ENCODE measurements at regions of chr15 and their contacts with region 1.

Region 1: DNA sequence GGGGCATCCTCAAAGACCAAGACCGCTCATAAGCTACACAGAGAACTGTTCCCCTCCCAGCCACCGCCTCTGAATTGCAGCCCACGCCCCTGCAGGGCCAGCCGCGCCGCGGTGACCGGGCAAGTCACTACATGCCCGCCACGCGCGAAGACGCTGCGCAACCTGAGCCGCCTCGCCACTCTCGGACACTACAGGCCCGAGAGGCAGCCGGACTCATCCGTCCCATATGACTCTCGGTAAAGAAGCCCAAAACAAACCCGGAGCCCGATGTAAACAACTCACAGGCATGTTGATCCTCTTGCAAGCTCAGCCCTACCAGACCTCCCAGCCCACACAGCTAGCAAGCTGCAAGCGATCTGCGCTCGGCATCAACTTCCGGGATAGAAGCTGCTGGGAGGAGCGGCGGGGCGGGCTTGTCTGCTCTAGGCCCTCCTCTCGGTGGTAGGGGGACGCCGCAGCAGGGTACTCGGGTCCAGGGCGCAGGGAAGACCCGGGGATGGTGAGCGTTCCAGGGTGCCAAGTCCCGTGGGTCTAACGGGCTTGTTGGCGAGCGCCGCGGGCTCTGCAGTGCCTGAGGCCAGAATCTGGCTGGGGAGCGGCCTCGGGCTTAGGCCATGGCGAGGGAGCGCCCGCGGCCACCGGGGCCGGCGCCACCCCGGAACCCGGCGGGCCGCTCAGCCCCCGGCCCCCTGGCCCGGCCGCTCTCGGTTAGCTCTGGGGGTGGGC is at the start of gene RPS27L:
- DNase-seq: peak; percentile 78
- ATAC-seq: peak; percentile 96
- H3K4me3 ChIP-seq: peak within 1 kb of the TSS; percentile 82 to 89
- H3K27ac ChIP-seq: peak within 1 kb of the TSS; percentile 92
- H3K4me1 ChIP-seq: peaks cover 9 to 13% of the 10 kb centered on the region in 2 experiments; a peak in 3 of 4 replicates
- H3K27me3 ChIP-seq: no peaks in the 10 kb centered on the region
- CTCF ChIP-seq: no peak
- POLR2A ChIP-seq: peak; percentile 88
- RAD21 ChIP-seq: no peak
- total RNA-seq, gene RPS27L: 139 TPM

Region 2: DNA sequence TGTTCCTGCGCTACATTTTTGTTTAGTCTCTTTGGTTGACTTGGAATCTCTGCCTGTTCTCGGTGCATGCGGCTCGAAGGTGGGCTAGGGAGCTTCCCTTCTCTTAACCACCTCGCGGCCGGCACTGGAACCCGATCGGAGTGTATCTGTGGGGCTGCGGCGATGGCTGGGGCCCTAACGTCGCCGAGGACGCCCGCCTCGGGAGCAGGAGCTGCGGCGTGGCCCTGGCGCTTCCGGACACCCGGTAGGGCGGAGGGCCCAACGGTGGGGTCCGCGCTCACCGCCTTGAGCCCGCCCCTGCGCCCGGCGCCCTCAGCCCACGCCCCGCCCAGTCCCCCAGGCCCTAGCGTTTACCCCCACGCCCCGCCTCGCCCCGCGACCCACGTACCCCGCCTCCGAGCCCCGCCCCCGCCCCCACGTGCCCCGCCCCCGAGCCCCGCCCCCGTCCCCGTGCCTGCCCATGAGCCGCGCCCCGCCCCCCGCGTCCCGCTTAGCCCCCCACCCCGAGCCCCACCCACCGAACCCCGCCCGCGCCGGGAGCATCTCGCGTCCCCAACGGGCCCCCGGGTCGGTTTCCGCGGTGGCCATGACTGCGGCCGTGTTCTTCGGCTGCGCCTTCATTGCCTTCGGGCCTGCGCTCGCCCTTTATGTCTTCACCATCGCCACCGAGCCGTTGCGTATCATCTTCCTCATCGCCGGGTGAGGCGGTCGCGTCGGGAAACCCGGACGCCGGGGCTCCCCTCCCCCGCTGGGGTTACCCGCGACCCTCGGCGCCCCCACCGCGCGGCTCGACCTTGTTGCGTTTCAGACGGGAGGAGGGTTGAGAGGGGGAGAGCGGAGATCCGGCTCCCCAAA is 120.0 kb after region 1 on chr15 and contains the start of gene APH1B:
- CTCF ChIA-PET with region 1: no interaction called
- POLR2A ChIA-PET with region 1: no interaction called
- RAD21 ChIA-PET with region 1: no interaction called
- intact Hi-C with region 1: loop called (anchors 10 kb)
- DNase-seq: no peak
- ATAC-seq: peak; percentile 91
- H3K4me3 ChIP-seq: peak within 1 kb of the TSS; percentile 63 to 75
- H3K27ac ChIP-seq: peak within 1 kb of the TSS; percentile 27; the same call in 1 of the 2 replicates
- H3K4me1 ChIP-seq: peaks cover 3 to 14% of the 10 kb centered on the region in 2 experiments; a peak in 3 of 4 replicates
- H3K27me3 ChIP-seq: no peaks in the 10 kb centered on the region
- CTCF ChIP-seq: no peak
- POLR2A ChIP-seq: peak; percentile 35
- RAD21 ChIP-seq: no peak
- total RNA-seq, gene APH1B: 8.5 TPM

Region 3: DNA sequence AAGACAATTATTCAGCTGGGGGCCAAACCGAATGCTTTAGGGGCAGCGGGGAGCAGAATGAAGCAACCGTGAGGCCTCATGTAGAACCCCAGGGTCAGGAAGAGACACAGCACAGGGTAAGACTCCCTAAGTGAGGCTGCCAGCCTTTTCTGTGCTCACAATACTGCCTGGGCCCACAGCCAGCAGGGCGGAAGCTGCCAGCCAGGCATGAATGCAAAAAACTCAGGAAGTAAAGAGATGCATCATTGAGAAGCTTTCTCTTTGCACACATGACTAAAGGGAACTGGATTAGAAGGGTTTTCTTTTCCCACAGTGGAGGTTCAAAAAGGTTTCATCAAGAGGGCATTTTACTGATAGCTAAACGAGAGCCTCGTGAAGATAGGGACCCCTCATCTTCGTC is 191.1 kb after region 1 on chr15:
- CTCF ChIA-PET with region 1: no interaction called
- POLR2A ChIA-PET with region 1: no interaction called
- RAD21 ChIA-PET with region 1: no interaction called
- intact Hi-C with region 1: no loop called
- DNase-seq: no peak
- ATAC-seq: no peak
- H3K4me3 ChIP-seq: no peak overlapping the region
- H3K27ac ChIP-seq: no peak overlapping the region
- H3K4me1 ChIP-seq: no peaks in the 10 kb centered on the region
- H3K27me3 ChIP-seq: no peaks in the 10 kb centered on the region
- CTCF ChIP-seq: no peak
- POLR2A ChIP-seq: no peak
- RAD21 ChIP-seq: no peak

Measured in HCT116 (cell line).